Motor neuron (in vitro differentiated cells): ENCODE measurements at regions of chr18 and their contacts with region 1.

Region 1: GRCh38 chr18:52339891-52340371 is at the start of gene DCC:
- ATAC-seq: peak in 7 of 8 experiments; percentile 23 to 77 (median 74)
- H3K4me3 ChIP-seq: peak within 1 kb of the TSS; percentile 47 to 59 (median 54)
- H3K27ac ChIP-seq: peak within 1 kb of the TSS; percentile 44 to 82
- H3K4me1 ChIP-seq: peaks cover 9 to 12% of the 10 kb centered on the region in 2 donors
- total RNA-seq, gene DCC: 0.04 to 66.0 (median 48.3) TPM in 6 of 8 experiments, not detected in the others

Region 2: GRCh38 chr18:52903857-52904256 is 563.9 kb after region 1 on chr18:
- in situ Hi-C with region 1: no loop called
- ATAC-seq: peak; percentile 17 to 94 (median 70)
- H3K4me3 ChIP-seq: no peak overlapping the region
- H3K27ac ChIP-seq: no peak overlapping the region
- H3K4me1 ChIP-seq: peaks cover 3 to 6% of the 10 kb centered on the region in 2 donors

Region 3: GRCh38 chr18:53380063-53380639 is 1040.2 kb after region 1 on chr18:
- in situ Hi-C with region 1: loop called in 1 of 9 experiments (anchors 25 kb)
- ATAC-seq: peak; percentile 29 to 85 (median 54)
- H3K4me3 ChIP-seq: no peak overlapping the region
- H3K27ac ChIP-seq: no peak overlapping the region
- H3K4me1 ChIP-seq: peaks cover 0 to 10% of the 10 kb centered on the region in 2 donors